Head of caudate nucleus (tissue), 42 donors: ENCODE measurements at regions of chr1 and their contacts with region 1.

Region 1: GRCh38 chr1:40143891-40144575 is 17.2 kb upstream of the RLF start:
- DNase-seq: peak in 38 of 42 donors; percentile 7 to 88 (median 58)

Region 2: DNA sequence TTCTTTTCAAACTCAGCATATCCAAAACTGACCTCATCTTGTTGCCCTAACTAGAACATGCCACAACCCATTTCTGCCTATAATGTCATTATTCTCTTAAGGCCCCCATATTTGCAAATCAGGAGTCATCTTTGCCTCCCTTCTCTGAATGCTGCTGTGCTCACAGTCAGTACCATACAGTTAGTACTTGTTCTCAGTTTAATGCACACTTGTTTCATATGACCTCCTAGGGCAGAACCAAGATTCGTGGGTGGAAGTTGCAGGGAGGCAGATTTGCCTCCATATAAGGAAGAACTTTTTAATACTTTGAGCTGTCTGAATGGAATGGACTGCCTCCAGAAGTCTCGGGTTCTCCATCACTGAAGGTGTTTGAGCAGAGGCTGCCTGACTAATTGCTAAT is 94.3 kb before region 1 on chr1:
- intact Hi-C with region 1: no loop called
- DNase-seq: peak in 24 of 42 donors; percentile 18 to 78 (median 43)

Region 3: DNA sequence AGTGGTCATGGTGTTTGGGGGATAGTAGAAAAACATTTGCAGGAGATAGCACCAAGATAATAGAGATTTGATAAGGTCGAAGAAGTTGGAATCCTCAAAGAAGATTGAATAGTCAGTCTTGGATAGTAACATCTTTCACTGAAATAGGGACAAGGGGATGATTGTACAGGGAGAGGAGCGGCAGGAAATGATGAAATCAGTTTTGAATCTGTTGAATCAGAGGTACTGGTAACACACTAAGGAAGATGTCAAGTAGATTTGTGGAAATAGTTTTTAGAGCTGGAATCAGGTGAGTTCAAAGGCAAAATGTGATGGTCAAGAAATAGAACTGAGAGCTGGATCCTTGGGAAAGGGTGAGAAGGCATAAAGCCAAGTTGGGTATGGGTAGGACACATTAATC is 77.0 kb before region 1 on chr1:
- intact Hi-C with region 1: no loop called
- DNase-seq: no peak

Region 4: DNA sequence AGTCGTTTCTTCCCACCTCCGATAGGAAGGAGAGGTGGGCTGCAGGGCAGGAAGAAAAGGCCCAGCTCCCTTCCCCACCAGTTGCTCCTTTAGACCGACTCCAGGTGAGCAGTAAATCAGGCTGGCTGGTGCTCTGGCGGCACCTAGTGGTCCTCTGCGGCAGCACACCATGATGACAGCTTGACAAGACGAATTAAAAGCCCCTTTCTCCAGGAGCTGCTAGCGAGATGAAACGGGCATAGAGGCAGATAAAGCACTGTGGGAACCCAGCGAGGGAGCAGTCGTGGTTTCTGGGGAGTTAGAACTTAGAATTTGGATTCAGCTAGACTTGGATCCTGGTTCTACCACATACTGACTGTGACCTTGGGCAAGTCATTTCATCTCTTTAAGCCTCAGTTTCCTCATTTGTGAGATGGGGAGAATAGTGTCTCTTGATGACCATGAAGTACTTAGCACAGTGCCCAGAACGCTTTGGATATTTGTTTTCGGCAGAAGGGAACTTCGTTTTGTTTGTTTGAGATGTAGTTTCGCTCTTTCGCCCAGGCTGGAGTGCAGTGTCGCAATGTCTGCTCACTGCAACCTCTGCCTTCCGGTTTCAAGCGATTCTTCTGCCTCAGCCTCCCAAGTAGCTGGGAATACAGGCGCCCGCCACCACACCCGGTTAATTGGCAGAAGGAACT is 194.9 kb after region 1 on chr1:
- intact Hi-C with region 1: loop called (anchors 5 kb)
- DNase-seq: peak; percentile 18 to 93 (median 84)

Region 5: DNA sequence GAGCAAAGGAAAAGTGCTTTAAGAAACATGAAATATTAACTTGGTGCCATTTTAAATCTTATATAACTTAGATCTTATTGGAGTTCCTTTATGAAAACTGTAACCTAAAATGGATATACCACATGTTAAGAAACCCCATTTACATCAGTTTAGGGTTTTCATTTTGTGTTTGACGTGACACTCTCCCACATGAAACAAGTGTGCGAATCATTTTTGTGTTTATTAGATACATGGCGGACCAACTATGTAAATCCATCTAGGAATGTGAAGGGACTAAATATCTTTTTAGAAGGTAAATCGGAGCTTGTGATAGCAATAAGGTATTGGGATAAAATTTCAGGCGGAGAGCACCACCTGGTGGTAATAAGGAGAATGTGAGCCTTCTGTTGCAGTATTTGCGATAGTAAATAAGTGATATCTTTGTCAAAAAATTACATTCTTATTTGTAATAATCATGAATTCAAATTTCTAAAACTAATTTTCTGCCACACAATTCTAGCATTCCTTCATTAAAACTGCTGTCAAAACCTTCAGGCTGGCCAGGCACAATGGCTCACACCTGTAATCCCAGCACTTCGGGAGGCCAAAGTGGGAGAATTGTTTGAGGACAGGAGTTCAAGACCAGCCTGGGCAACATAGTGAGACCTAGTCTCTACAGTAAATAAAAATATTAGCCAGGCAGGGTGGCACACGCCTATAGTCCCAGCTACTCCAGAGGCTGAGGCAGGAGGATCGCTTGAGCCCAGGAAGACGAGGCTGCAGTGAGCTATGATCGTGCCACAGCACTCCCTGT is 260.8 kb after region 1 on chr1:
- intact Hi-C with region 1: loop called (anchors 10 kb)
- DNase-seq: peak in 31 of 42 donors; percentile 37 to 85 (median 58)